ENCODE measurements at regions of chr1 and their contacts with region 1.

Region 1: DNA sequence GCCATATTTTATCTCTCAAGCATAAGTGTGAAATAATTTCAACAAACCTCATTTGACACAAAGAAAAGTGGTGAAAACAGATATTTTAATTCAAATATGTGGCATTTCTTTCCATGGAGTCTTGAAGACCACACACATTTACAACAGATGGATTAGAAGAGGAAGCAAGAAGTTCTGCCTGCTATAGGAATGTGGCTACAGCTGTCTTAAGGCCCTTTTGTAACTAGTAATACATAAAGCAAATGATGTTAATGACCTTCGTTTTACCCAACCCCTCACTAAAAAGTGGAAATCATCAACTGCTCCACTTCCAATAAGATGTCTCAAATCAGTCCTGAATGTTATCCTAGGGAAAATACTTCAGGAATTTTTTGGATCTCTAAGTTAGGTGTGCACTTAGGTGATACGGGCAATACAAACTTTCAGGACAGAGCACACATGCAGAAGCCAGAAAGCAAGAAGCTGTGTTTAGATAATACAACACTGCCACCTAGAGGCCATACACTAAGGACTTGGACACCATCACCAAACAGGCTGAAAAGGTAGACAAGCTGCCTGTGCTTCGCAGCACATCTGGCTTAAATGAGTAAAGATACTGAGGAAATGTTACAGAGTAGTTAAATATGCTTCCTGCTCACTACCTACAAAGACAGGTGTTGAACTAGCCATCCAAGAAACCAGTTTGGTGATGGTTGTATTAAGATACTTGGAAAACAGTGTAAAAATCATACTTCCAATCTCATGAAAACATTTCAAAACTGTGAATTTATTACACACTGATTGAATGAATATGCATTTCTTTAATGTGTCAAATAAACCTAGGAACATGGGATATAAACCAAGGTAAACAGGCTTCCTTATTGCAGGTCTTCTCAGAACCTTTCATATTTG is 24.4 kb downstream of the RRAGC start:
- DNase-seq: no peak
- ATAC-seq: peak; percentile 78 to 85
- H3K4me3 ChIP-seq: no peak overlapping the region
- H3K27ac ChIP-seq: no peak overlapping the region
- H3K4me1 ChIP-seq: no peaks in the 10 kb centered on the region
- H3K27me3 ChIP-seq: no peaks in the 10 kb centered on the region

Region 2: DNA sequence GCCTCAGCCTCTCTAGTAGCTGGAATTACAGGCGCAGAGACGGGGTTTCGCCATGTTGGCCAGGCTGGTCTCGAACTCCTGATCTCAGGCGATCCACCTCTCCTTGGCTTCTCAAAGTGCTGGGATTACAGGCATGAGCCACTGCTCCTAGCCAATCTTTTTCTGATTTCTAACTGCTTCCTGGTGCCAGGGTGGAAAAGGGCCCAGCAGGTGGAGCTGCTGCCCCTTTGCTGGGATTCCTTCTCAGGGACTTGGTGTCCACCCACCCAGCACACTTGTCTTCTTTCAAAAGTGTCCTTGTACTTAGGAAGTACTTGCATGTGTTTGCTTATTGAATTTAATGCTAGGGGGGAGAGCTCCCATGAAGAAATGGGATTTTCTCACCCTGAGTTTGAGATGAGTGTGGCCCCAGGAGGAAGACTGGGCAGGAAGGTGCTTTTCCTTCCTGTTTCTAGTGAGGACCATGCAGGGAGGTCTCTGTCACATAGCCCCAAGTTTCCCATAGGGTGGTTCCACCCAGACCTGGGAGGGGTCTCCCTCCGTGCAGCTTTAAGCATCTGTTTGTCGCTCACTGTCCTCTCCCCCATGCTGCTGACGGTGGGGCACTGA is 808.5 kb before region 1 on chr1:
- intact Hi-C with region 1: loop called in 2 of 4 experiments (anchors 10 kb)
- DNase-seq: no peak
- ATAC-seq: no peak
- H3K4me3 ChIP-seq: no peak overlapping the region
- H3K27ac ChIP-seq: no peak overlapping the region
- H3K4me1 ChIP-seq: peaks cover 15% of the 10 kb centered on the region
- H3K27me3 ChIP-seq: no peaks in the 10 kb centered on the region

Region 3: DNA sequence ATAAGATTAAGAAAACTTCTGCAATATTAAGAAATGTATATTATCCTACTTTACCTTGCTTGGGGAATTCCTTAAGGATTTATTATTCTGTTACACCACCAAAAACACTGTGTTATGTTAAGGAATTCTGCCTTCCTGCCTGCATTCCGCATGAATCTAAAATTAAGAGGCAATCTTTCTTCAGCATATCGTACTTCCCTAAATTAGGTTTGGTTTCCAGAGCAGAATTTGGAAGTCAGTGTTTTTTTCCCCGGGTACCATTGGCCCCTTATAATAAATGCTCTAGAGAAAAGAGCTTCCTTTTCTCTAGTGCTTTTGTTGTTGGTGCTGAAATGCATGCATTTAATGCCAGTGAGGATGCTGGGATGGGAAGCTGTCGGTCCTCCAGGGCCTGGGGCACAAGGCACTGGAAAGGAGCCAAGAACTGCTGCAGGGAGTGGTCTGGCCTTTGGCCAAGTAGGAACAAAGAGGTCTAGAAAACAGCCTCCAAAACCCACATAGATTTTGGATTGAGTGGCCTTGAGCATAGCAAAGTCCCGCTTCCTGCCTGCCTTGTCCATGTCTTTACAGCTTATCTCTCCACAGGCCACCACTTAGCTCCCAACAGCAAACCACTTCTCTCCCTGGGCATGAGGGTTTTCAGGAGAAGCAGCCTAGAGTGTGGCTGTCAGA is 45.5 kb before region 1 on chr1:
- intact Hi-C with region 1: no loop called
- DNase-seq: no peak
- ATAC-seq: no peak
- H3K4me3 ChIP-seq: no peak overlapping the region
- H3K27ac ChIP-seq: no peak overlapping the region
- H3K4me1 ChIP-seq: no peaks in the 10 kb centered on the region
- H3K27me3 ChIP-seq: no peaks in the 10 kb centered on the region

Region 4: GRCh38 chr1:38919130-38919529 is 83.9 kb after region 1 on chr1:
- intact Hi-C with region 1: no loop called
- DNase-seq: no peak
- ATAC-seq: peak in 1 of 2 donors; percentile 39
- H3K4me3 ChIP-seq: no peak overlapping the region
- H3K27ac ChIP-seq: no peak overlapping the region
- H3K4me1 ChIP-seq: no peaks in the 10 kb centered on the region
- H3K27me3 ChIP-seq: no peaks in the 10 kb centered on the region

Region 5: DNA sequence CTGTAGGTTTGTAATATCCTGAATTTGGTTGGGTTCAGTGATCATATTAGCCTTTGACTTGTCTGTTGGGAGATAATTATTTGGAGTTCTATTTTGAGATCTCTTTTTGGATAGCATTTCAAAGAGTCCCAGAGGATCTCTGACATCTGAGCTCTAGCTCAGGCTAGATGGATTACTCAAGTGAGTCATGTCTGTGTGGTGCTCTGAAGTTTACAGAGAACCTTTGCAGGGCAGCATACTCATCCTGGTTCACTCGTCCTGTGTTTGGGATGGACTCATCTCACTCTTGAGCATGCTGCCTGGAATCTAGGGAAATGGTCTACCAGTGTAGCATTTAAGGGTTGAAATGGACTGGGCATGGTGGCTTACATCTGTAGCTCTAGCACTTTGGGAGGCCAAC is 626.9 kb after region 1 on chr1:
- intact Hi-C with region 1: no loop called
- DNase-seq: no peak
- ATAC-seq: no peak
- H3K4me3 ChIP-seq: no peak overlapping the region
- H3K27ac ChIP-seq: no peak overlapping the region
- H3K4me1 ChIP-seq: no peaks in the 10 kb centered on the region
- H3K27me3 ChIP-seq: no peaks in the 10 kb centered on the region

Measured in right cardiac atrium (tissue), 5 donors.